ENCODE measurements at regions of chr17 and their contacts with region 1.

Region 1: GRCh38 chr17:47066841-47067682 is 88.0 kb upstream of the RPRML start:
- DNase-seq: peak; percentile 87
- H3K4me3 ChIP-seq: peak overlapping the region; percentile 76
- H3K27ac ChIP-seq: peak overlapping the region; percentile 90
- H3K4me1 ChIP-seq: no peaks in the 10 kb centered on the region
- H3K27me3 ChIP-seq: no peaks in the 10 kb centered on the region
- CTCF ChIP-seq: no peak

Region 2: DNA sequence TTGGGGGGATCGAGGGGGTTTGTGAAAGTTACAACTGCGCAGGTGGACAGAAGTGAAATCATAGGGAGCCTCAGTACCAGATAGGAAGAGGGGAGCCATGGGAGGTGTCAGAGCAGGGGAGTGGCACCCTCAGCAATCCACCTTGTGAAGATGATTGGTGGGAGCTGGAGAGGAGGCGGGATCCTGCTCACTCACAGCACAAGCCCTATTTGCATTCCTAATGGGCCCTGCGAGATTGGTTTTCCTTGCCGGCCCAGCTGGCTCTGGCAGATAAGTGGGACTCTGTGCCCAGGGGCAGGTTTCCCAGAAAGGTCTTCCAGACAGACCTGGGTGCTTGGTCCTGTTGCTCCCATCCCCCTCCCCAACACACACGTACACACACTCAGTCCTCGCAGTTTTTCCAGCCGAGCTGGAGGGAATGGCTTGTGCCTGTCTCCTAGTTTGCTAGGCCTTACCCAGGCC is 257.9 kb before region 1 on chr17:
- CTCF ChIA-PET with region 1: no interaction called
- POLR2A ChIA-PET with region 1: interaction called, 10 read pairs
- intact Hi-C with region 1: no loop called
- DNase-seq: peak; percentile 9
- H3K4me3 ChIP-seq: no peak overlapping the region
- H3K27ac ChIP-seq: no peak overlapping the region
- H3K4me1 ChIP-seq: no peaks in the 10 kb centered on the region
- H3K27me3 ChIP-seq: no peaks in the 10 kb centered on the region
- CTCF ChIP-seq: no peak

Region 3: GRCh38 chr17:46929413-46929812 is 137.6 kb before region 1 on chr17:
- CTCF ChIA-PET with region 1: no interaction called
- POLR2A ChIA-PET with region 1: no interaction called
- intact Hi-C with region 1: no loop called
- DNase-seq: peak; percentile 45
- H3K4me3 ChIP-seq: no peak overlapping the region
- H3K27ac ChIP-seq: no peak overlapping the region
- H3K4me1 ChIP-seq: no peaks in the 10 kb centered on the region
- H3K27me3 ChIP-seq: no peaks in the 10 kb centered on the region
- CTCF ChIP-seq: no peak

Region 4: GRCh38 chr17:47145351-47145750 is 78.3 kb after region 1 on chr17:
- CTCF ChIA-PET with region 1: no interaction called
- POLR2A ChIA-PET with region 1: no interaction called
- intact Hi-C with region 1: no loop called
- DNase-seq: no peak
- H3K4me3 ChIP-seq: no peak overlapping the region
- H3K27ac ChIP-seq: no peak overlapping the region
- H3K4me1 ChIP-seq: no peaks in the 10 kb centered on the region
- H3K27me3 ChIP-seq: no peaks in the 10 kb centered on the region
- CTCF ChIP-seq: no peak

Region 5: GRCh38 chr17:47205419-47205963 is 138.4 kb after region 1 on chr17:
- CTCF ChIA-PET with region 1: no interaction called
- POLR2A ChIA-PET with region 1: no interaction called
- intact Hi-C with region 1: no loop called
- DNase-seq: no peak
- H3K4me3 ChIP-seq: no peak overlapping the region
- H3K27ac ChIP-seq: no peak overlapping the region
- H3K4me1 ChIP-seq: no peaks in the 10 kb centered on the region
- H3K27me3 ChIP-seq: no peaks in the 10 kb centered on the region
- CTCF ChIP-seq: no peak

Region 6: GRCh38 chr17:47315451-47316266 is 248.6 kb after region 1 on chr17:
- CTCF ChIA-PET with region 1: no interaction called
- POLR2A ChIA-PET with region 1: no interaction called
- intact Hi-C with region 1: no loop called
- DNase-seq: peak; percentile 67
- H3K4me3 ChIP-seq: no peak overlapping the region
- H3K27ac ChIP-seq: no peak overlapping the region
- H3K4me1 ChIP-seq: no peaks in the 10 kb centered on the region
- H3K27me3 ChIP-seq: no peaks in the 10 kb centered on the region
- CTCF ChIP-seq: peak; percentile 73

Measured in A673 (cell line).